Lower leg skin (tissue), 4 donors: ENCODE measurements at regions of chr1 and their contacts with region 1.

Region 1: GRCh38 chr1:67646145-67647035 is 38.6 kb upstream of the GADD45A start:
- DNase-seq: no peak
- H3K4me3 ChIP-seq: no peak overlapping the region
- CTCF ChIP-seq: no peak
- POLR2A ChIP-seq: no peak

Region 2: GRCh38 chr1:67134695-67135094 is 511.7 kb before region 1 on chr1 and contains the start of gene C1orf141:
- intact Hi-C with region 1: loop called (anchors 10 kb)
- DNase-seq: no peak
- H3K4me3 ChIP-seq: no peak within 1 kb of the TSS
- CTCF ChIP-seq: no peak
- POLR2A ChIP-seq: no peak
- total RNA-seq, gene C1orf141: not detected

Region 3: GRCh38 chr1:67572271-67573221 is 73.8 kb before region 1 on chr1:
- intact Hi-C with region 1: no loop called
- DNase-seq: peak in 1 of 2 donors; percentile 80
- H3K4me3 ChIP-seq: no peak overlapping the region
- CTCF ChIP-seq: no peak
- POLR2A ChIP-seq: no peak